ENCODE measurements at regions of chr13 and their contacts with region 1.

Region 1: GRCh38 chr13:91699863-91700262 is 301.4 kb downstream of the GPC5 start:
- DNase-seq: no peak
- ATAC-seq: no peak
- H3K4me3 ChIP-seq: no peak overlapping the region
- H3K27ac ChIP-seq: no peak overlapping the region
- H3K4me1 ChIP-seq: no peaks in the 10 kb centered on the region
- H3K27me3 ChIP-seq: no peaks in the 10 kb centered on the region
- CTCF ChIP-seq: no peak
- EP300 ChIP-seq: no peak
- POLR2A ChIP-seq: no peak
- RAD21 ChIP-seq: no peak

Region 2: GRCh38 chr13:90889906-90890834 is 809.7 kb before region 1 on chr13:
- CTCF ChIA-PET with region 1: no interaction called
- POLR2A ChIA-PET with region 1: no interaction called
- in situ Hi-C with region 1: no loop called
- intact Hi-C with region 1: no loop called
- DNase-seq: no peak
- ATAC-seq: no peak; the same call in 2 of the 3 replicates
- H3K4me3 ChIP-seq: no peak overlapping the region
- H3K27ac ChIP-seq: no peak overlapping the region
- H3K4me1 ChIP-seq: no peaks in the 10 kb centered on the region
- H3K27me3 ChIP-seq: no peaks in the 10 kb centered on the region
- CTCF ChIP-seq: no peak
- EP300 ChIP-seq: no peak
- POLR2A ChIP-seq: no peak
- RAD21 ChIP-seq: no peak

Region 3: DNA sequence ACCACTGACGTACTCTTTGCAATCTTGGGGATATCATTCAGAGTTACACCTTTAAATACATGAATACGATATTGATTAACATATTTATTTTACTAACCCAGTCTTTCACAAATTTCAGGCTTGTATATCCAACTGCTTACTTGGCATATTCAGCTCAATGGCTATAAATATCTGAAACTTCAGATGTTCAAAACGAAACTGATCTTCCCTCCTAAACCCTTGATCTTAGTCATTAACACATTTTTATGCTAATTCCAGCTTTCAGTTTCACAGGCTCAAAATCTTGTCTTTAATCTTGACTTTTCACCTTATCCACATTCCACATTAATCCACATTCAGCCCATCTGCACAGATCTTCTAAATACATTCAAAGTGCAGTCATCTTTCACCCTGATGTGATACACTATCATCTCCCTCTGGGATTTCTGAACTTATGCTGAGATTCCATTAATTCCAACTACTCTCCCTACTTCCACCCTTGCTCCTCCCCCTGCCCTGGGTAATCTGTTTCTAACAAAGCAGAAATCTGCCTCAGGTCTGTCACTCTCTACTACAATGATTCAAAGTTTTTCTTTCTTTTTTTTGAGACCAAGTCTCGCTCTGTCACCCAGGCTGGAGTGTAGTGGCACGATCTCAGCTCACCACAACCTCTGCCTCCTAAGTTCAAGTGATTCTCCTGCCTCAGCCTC is 85.7 kb after region 1 on chr13:
- CTCF ChIA-PET with region 1: no interaction called
- POLR2A ChIA-PET with region 1: no interaction called
- in situ Hi-C with region 1: no loop called
- intact Hi-C with region 1: loop called (anchors 5 kb)
- DNase-seq: no peak
- ATAC-seq: no peak; the same call in 2 of the 3 replicates
- H3K4me3 ChIP-seq: no peak overlapping the region
- H3K27ac ChIP-seq: no peak overlapping the region
- H3K4me1 ChIP-seq: no peaks in the 10 kb centered on the region
- H3K27me3 ChIP-seq: no peaks in the 10 kb centered on the region
- CTCF ChIP-seq: no peak
- EP300 ChIP-seq: no peak
- POLR2A ChIP-seq: no peak
- RAD21 ChIP-seq: no peak

Measured in K562 (cell line).